AG04449 (cell line): ENCODE measurements at regions of chr3 and their contacts with region 1.

Region 1: DNA sequence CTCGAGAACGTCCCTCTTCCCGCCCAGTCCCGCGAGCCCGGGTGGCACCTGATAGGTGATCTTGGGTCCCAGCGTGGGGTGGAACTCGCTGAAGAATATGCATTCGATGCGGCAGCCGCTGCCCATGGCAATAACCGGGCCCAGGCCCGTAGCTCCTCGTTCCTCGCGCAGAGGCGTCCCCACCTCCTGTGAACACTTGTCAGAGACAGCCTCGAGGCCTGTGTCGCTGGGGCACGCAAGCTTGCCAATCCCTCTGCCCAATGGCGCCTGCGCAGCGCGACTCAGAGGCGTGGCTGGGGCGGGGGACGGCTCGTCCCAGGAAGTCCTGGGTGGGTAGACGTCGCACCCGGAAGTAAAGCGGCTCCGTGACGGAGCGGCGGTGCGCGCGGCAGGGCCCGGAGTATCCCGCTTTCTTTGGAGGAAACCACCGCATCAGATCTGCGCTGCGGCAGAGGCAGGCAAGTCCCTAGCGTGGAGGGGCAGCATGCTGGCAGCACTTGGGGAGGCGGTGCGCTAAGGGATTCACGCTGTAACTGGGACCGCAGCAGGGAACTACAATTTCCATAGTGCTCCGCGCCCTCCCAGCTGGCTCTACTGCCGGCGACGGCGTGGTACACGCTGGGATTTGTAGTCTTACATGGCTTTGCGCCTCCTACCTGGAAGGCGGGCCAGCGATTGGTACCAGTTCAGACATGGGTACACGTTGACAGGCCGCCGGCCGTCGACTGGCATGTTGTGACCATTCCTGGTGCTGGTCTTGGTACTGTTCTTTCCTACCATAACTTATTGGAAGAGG is at the starts of genes CYB561D2 and NPRL2:
- DNase-seq: peak; percentile 55
- H3K4me3 ChIP-seq: peak within 1 kb of the TSS; percentile 99
- CTCF ChIP-seq: no peak

Region 2: DNA sequence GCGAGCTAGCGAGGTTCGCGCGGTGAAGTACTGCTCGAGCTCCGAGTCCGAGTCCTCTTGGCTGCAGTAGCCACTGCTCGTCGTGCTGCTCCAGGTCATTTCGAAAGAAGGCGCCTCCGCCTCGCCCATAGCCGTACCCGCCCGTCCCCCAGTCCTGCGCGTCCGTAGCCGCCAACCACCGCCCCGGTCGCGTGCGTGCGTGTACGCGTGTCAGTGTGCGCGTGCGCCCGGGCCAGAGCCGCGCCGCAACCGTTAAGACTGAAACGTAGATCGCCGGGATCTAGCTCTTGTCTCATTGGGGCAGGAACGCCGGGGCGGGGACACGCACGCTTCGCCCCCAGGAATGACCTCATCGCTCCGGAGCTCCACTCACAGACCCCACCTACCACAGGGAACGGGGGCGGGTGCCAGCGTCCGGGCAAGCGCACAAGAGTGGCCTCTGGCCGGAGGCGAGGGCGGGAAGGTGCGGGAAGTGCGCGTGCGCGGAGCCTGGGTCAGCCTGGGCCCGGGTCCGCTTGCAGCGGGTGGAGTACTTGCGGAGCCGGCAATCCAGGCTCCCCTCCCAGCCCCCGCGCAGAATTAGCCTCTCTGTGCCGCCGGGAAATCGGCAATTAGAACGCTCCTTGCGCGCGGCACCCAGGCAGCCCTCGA is 13.4 kb before region 1 on chr3:
- CTCF ChIA-PET with region 1: interaction called, 46 read pairs
- POLR2A ChIA-PET with region 1: interaction called, 10 read pairs
- DNase-seq: peak; percentile 96
- H3K4me3 ChIP-seq: peak overlapping the region; percentile 92
- CTCF ChIP-seq: no peak